ENCODE measurements at regions of chr12 and their contacts with region 1.

Region 1: DNA sequence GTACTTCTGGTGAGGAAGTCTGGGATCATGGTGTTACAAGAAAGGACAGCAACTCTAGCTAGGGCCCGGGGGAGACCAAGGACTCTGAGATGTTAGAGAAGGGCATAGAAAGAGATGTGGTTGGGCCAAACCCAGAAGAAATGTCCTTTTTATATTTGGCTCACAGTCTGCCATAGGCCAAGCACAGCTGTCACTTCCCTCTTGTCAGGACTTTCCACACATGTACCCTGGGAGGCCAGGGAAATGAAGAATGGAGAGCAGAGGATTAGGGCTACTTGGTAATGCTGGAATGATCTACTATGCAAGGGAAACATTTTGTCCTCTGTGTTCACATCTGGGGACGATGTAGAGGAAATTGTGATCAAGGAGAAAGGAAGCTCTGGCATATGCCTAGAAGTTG is 9.2 kb downstream of the MYO1A start:
- DNase-seq: no peak
- H3K4me3 ChIP-seq: no peak overlapping the region
- H3K27ac ChIP-seq: no peak overlapping the region
- H3K4me1 ChIP-seq: peaks cover 0 to 8% (median 0%) of the 10 kb centered on the region in 4 experiments
- H3K27me3 ChIP-seq: no peaks in the 10 kb centered on the region

Region 2: GRCh38 chr12:56931474-56931978 is 109.2 kb before region 1 on chr12:
- CTCF ChIA-PET with region 1: no interaction called
- POLR2A ChIA-PET with region 1: no interaction called
- DNase-seq: peak; percentile 85 to 94 (median 94)
- H3K4me3 ChIP-seq: peak overlapping the region in 5 of 7 experiments; percentile 8 to 57 (median 44)
- H3K27ac ChIP-seq: peak overlapping the region in 1 of 2 experiments; percentile 78
- H3K4me1 ChIP-seq: peaks cover 11 to 52% (median 32%) of the 10 kb centered on the region in 4 experiments
- H3K27me3 ChIP-seq: no peaks in the 10 kb centered on the region

Region 3: GRCh38 chr12:56957229-56957939 is 83.4 kb before region 1 on chr12 and contains the start of gene RDH16:
- CTCF ChIA-PET with region 1: no interaction called
- POLR2A ChIA-PET with region 1: no interaction called
- DNase-seq: no peak
- H3K4me3 ChIP-seq: no peak within 1 kb of the TSS
- H3K27ac ChIP-seq: no peak within 1 kb of the TSS
- H3K4me1 ChIP-seq: no peaks in the 10 kb centered on the region
- H3K27me3 ChIP-seq: no peaks in the 10 kb centered on the region

Region 4: DNA sequence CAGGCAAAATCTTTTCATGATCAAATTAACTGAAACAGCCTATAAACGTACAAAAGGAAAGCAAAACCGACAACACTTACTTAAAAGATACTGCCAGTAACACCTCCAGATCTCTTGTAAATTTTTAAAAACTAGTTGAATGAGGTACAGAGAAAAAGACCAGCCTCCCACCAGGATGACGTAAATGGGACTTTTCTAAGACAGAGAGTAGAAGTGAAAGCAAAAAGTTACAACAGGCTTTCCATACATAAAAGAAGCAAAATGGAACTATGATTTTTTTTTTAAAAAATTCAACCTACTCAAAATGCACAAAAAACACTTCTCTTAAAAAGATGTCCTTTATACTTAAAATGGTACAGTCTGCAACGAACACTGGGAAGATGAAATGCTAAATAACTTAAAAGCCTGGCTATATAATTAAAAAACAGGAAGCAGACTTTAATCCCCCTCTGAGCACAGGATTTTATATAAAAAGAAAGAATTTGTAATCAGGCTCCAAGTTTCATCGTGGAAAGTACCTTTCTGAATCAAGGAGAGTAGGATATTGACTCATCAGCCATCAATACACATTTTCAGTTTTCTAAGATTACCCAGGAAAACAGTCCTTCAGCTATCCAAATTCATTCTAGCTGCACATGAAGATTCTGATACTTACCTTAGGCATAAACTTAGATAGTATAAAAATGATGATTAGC is 23.4 kb after region 1 on chr12:
- CTCF ChIA-PET with region 1: interaction called, 56 read pairs
- POLR2A ChIA-PET with region 1: no interaction called
- DNase-seq: peak in 2 of 3 donors; percentile 56 to 74
- H3K4me3 ChIP-seq: peak overlapping the region in 1 of 7 experiments; percentile 34
- H3K27ac ChIP-seq: peak overlapping the region; percentile 27 to 29
- H3K4me1 ChIP-seq: peaks cover 0 to 9% (median 0%) of the 10 kb centered on the region in 4 experiments
- H3K27me3 ChIP-seq: no peaks in the 10 kb centered on the region

Measured in common myeloid progenitor, CD34-positive (primary cell).